ENCODE measurements at regions of chr19 and their contacts with region 1.

Region 1: GRCh38 chr19:9075064-9075949 is 11.6 kb upstream of the OR1M1 start:
- DNase-seq: no peak
- ATAC-seq: no peak
- H3K4me3 Mint-ChIP-seq: no peak overlapping the region
- H3K27ac Mint-ChIP-seq: no peak overlapping the region
- H3K4me1 Mint-ChIP-seq: no peaks in the 10 kb centered on the region
- H3K27me3 Mint-ChIP-seq: no peaks in the 10 kb centered on the region

Region 2: GRCh38 chr19:8697671-8698432 is 377.5 kb before region 1 on chr19:
- CTCF ChIA-PET with region 1: no interaction called
- POLR2A ChIA-PET with region 1: no interaction called
- intact Hi-C with region 1: loop called in 1 of 2 experiments (anchors 5 kb)
- DNase-seq: peak; percentile 51
- ATAC-seq: no peak
- H3K4me3 Mint-ChIP-seq: no peak overlapping the region
- H3K27ac Mint-ChIP-seq: no peak overlapping the region
- H3K4me1 Mint-ChIP-seq: peaks cover 20% of the 10 kb centered on the region
- H3K27me3 Mint-ChIP-seq: peaks cover 4% of the 10 kb centered on the region

Region 3: DNA sequence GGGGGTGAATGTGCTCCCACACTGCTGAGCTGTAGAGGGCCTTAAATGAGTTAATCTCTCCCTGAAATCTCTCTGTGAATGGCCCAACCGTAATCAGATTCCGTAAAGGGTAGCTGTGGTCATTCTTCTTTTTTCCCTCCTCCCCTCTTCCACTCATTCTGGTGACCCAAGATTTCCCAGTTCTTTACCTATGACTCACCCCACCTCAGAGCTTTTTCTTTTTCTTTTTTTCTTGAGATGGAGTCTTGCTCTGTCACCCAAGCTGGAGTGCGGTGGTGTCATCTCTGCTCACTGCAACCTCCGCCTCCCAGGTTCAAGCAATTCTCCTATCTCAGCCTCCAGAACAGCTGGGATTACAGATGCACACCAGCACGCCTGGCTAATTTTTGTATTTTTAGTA is 31.8 kb before region 1 on chr19:
- CTCF ChIA-PET with region 1: no interaction called
- POLR2A ChIA-PET with region 1: no interaction called
- intact Hi-C with region 1: no loop called
- DNase-seq: no peak
- ATAC-seq: no peak
- H3K4me3 Mint-ChIP-seq: no peak overlapping the region
- H3K27ac Mint-ChIP-seq: no peak overlapping the region
- H3K4me1 Mint-ChIP-seq: no peaks in the 10 kb centered on the region
- H3K27me3 Mint-ChIP-seq: peaks cover 9% of the 10 kb centered on the region

Region 4: GRCh38 chr19:10000171-10000826 is 925.0 kb after region 1 on chr19:
- CTCF ChIA-PET with region 1: no interaction called
- POLR2A ChIA-PET with region 1: no interaction called
- intact Hi-C with region 1: no loop called
- DNase-seq: peak; percentile 85
- ATAC-seq: peak; percentile 62
- H3K4me3 Mint-ChIP-seq: no peak overlapping the region
- H3K27ac Mint-ChIP-seq: no peak overlapping the region
- H3K4me1 Mint-ChIP-seq: peaks cover 8% of the 10 kb centered on the region
- H3K27me3 Mint-ChIP-seq: peaks cover 27% of the 10 kb centered on the region